Body of pancreas (tissue), 4 donors: ENCODE measurements at regions of chr1 and their contacts with region 1.

Region 1: GRCh38 chr1:43763497-43763973 is 56.2 kb downstream of the ST3GAL3 start:
- DNase-seq: peak; percentile 69 to 86 (median 77)
- ATAC-seq: peak; percentile 93
- H3K4me3 ChIP-seq: no peak overlapping the region
- H3K27ac ChIP-seq: no peak overlapping the region
- H3K4me1 ChIP-seq: no peaks in the 10 kb centered on the region
- H3K27me3 ChIP-seq: no peaks in the 10 kb centered on the region
- CTCF ChIP-seq: peak; percentile 43 to 94 (median 88)
- POLR2A ChIP-seq: no peak

Region 2: GRCh38 chr1:43348809-43349583 is 414.5 kb before region 1 on chr1:
- intact Hi-C with region 1: no loop called
- DNase-seq: peak; percentile 95 to 97 (median 96)
- ATAC-seq: peak; percentile 92
- H3K4me3 ChIP-seq: peak overlapping the region in 1 of 2 donors; percentile 37
- H3K27ac ChIP-seq: peak overlapping the region; percentile 96 to 99 (median 98)
- H3K4me1 ChIP-seq: peaks cover 20% of the 10 kb centered on the region
- H3K27me3 ChIP-seq: no peaks in the 10 kb centered on the region
- CTCF ChIP-seq: peak in 2 of 7 experiments; percentile 13 to 22
- POLR2A ChIP-seq: peak; percentile 70 to 97 (median 93)

Region 3: DNA sequence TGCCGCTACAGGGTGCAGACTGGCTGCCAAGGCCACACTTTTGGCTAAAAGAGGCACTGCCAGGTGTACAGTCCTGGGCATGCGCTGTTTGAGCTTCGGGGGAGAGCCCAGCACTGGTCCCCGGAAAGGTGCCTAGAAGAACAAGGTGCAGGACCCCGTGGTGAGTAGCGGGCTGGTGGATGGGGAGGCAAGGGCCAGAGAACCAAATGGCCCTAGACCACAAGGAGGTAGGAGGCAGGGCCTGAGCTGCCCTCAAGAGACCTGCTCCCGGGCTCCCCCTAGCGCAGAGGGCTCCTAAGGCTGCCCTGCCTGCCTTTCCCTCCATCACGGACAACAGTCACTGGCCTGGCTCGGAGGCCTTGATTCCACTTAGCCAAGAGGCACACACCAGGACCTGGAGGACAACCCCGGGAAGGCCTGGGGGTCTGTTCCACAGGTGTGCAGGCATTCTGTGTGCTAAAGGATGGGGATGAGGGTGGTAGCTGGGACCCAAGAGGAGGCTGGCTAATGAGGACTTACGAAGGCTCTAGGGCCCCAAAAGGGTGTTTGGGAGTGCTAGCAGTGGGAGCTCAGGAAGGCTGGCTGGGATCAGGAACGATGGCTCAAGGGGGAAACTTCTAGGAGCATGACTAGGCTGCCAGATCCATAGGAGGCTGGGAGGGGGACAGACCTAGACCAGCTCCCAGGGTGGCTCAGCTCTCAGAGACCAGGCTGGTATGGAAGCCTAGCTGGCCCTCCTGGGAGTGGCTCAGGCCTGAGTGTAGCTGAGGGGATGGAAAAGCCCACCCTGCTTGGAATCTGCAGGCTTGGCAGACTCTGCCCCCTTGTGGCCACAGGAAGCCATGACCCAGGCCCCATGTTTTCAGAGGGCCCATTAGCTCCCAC is 170.8 kb after region 1 on chr1:
- intact Hi-C with region 1: loop called (anchors 10 kb)
- DNase-seq: peak; percentile 72 to 83 (median 80)
- ATAC-seq: peak; percentile 54
- H3K4me3 ChIP-seq: no peak overlapping the region
- H3K27ac ChIP-seq: peak overlapping the region; percentile 7 to 60 (median 42)
- H3K4me1 ChIP-seq: peaks cover 45% of the 10 kb centered on the region
- H3K27me3 ChIP-seq: no peaks in the 10 kb centered on the region
- CTCF ChIP-seq: peak; percentile 49 to 72 (median 61)
- POLR2A ChIP-seq: no peak

Region 4: DNA sequence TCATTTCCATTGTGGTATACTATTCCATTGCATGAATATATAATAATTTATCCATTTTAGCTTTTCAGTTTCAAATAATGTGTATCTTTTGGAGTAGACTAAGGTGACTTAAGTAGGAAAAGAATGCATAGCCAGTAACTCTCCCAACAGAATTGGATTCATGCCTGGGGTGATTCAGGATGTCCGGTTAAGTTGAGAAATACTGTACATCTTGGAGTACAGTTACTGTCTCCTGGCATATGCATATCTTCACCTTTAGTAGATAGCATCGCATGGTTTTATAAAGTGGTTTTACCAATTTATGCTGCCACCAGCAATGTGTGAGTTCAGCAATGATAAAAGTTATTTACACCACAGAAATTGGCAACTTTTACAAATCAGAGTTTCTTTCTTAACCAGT is 286.3 kb after region 1 on chr1:
- intact Hi-C with region 1: loop called (anchors 10 kb)
- DNase-seq: no peak
- ATAC-seq: no peak
- H3K4me3 ChIP-seq: no peak overlapping the region
- H3K27ac ChIP-seq: no peak overlapping the region
- H3K4me1 ChIP-seq: peaks cover 7% of the 10 kb centered on the region
- H3K27me3 ChIP-seq: no peaks in the 10 kb centered on the region
- CTCF ChIP-seq: no peak
- POLR2A ChIP-seq: no peak

Region 5: GRCh38 chr1:44089371-44090049 is 326.0 kb after region 1 on chr1:
- intact Hi-C with region 1: no loop called
- DNase-seq: no peak
- ATAC-seq: no peak
- H3K4me3 ChIP-seq: no peak overlapping the region
- H3K27ac ChIP-seq: no peak overlapping the region
- H3K4me1 ChIP-seq: no peaks in the 10 kb centered on the region
- H3K27me3 ChIP-seq: no peaks in the 10 kb centered on the region
- CTCF ChIP-seq: no peak
- POLR2A ChIP-seq: no peak